ENCODE measurements at regions of chr16 and their contacts with region 1.

Region 1: DNA sequence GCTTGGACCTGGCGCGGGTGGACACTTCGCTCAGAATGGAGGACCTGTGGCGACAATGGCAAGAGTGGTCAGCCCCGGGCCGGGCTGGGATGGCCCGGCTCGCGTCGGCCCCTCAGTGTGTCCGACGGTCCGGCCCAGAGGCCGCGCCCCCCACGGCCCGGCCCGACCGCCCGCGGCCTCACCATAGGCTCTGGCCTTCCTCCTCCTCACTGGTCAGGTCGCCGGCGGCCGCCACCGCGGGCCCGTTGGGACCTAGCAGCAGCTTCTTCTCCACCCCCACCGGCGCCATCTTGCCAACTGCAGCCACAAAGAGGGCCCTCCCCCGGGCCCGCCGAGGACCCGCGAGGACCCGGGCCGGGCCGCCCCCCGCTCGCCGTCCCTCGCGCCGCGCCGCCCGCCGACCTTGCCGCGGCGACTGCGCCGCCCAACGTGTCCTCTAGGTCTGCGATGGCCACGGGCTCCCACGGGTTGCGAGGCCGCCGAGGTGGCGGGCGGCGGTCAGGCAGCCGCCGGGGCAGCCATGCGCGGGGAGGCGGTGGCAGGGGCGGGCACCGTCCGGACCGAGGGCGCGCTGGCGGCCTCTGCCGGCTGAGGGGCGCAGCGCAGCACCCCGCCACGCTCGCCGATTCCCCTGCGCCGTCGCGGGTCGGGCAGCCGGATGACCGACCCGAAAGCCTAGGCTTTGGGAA is at the start of gene DYNC1LI2:
- DNase-seq: peak; percentile 85
- H3K4me3 ChIP-seq: peak within 1 kb of the TSS; percentile 83
- H3K27ac ChIP-seq: peak within 1 kb of the TSS; percentile 9
- H3K4me1 ChIP-seq: peaks cover 15% of the 10 kb centered on the region
- CTCF ChIP-seq: peak; percentile 80; the same call in 1 of the 2 replicates
- total RNA-seq, gene DYNC1LI2: 48.4 and 48.9 TPM in 2 replicates

Region 2: DNA sequence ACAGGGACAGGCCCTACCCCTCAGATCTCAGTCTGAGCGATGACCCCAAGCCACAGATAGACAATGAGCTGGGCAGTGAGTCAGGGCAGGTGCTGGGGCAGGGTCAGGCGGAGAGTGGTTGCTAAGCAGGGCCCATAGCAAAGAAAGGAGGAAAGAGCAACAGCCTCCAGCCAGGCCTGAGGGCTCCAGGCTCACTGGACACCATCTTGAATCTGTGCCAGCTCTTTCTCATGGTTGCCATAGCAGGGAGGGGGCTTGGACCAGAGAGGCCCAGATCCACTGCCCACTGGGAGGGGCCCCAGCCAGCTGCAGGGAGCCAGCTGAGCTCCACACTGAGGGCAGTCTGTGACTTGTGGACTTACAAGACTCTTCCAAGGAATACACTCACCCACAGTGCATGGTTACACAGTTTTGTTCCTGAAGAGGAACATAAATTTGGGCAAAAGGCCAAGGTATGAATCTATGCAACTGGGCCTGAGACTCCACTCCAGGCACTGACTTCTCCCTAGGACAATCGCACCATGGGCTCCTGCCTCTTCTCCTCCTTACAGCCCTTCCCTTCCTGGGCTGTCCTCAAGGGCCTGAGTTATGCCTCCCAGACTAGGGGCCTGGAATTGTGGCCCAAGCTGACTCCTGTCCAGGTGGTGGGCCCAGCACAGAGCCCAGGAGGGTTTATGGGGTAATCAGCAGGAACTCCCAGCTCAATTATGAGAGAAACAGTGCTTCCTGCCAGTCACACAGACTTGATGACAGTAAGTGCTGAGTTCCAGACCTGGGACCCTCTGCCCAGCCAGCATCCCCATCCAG is 264.5 kb before region 1 on chr16:
- CTCF ChIA-PET with region 1: no interaction called
- POLR2A ChIA-PET with region 1: no interaction called
- intact Hi-C with region 1: no loop called
- DNase-seq: no peak
- H3K4me3 ChIP-seq: no peak overlapping the region
- H3K27ac ChIP-seq: no peak overlapping the region
- H3K4me1 ChIP-seq: no peaks in the 10 kb centered on the region
- CTCF ChIP-seq: no peak

Region 3: DNA sequence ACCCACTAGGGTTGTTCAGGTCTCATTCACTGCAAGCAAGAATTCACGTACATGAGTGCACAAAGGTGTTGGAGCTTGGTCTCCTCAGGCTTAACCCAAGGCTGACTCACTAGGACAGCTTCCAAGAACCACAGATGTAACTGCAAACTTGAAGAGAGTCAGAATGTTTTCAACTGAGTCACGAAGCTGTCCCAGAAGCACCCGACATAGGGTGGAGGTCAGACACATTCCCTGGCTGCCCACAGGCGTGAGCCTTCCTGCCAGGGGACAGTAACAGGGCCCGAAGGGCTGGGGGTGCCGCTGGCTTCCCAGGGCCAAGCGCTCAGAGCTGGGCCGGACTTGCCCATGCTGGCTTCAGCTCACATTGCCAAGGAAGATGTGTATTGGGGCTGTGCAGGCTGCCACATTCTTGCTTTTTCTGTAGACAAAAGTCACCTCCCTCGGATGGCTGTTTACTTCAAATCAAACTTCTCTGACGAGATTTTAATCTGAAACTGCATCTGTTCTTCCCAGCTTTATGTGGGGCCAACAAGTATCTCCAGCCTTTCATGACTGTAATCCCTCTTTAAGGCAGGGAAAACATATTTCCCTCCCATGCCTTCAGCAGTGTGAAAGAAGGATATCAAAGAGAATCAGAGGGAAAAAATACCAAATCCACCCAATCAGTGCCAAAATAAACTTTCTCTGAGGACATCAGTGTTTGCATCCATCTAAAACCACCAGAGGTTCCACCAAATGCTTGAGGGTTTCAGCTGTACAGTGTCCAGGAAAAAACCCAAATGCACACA is 132.7 kb before region 1 on chr16:
- CTCF ChIA-PET with region 1: no interaction called
- POLR2A ChIA-PET with region 1: no interaction called
- intact Hi-C with region 1: loop called (anchors 5 kb)
- DNase-seq: no peak
- H3K4me3 ChIP-seq: no peak overlapping the region
- H3K27ac ChIP-seq: no peak overlapping the region
- H3K4me1 ChIP-seq: peaks cover 27% of the 10 kb centered on the region
- CTCF ChIP-seq: no peak

Region 4: GRCh38 chr16:66844342-66845079 is 93.1 kb after region 1 on chr16 and contains the start of gene CA7:
- CTCF ChIA-PET with region 1: no interaction called
- POLR2A ChIA-PET with region 1: no interaction called
- intact Hi-C with region 1: no loop called
- DNase-seq: no peak
- H3K4me3 ChIP-seq: no peak within 1 kb of the TSS
- H3K27ac ChIP-seq: no peak within 1 kb of the TSS
- H3K4me1 ChIP-seq: peaks cover 8% of the 10 kb centered on the region
- CTCF ChIP-seq: no peak
- total RNA-seq, gene CA7: not detected in 2 replicates

Region 5: GRCh38 chr16:66858740-66859396 is 107.4 kb after region 1 on chr16:
- CTCF ChIA-PET with region 1: no interaction called
- POLR2A ChIA-PET with region 1: interaction called, 12 read pairs
- intact Hi-C with region 1: no loop called
- DNase-seq: no peak
- H3K4me3 ChIP-seq: no peak overlapping the region
- H3K27ac ChIP-seq: no peak overlapping the region
- H3K4me1 ChIP-seq: no peaks in the 10 kb centered on the region
- CTCF ChIP-seq: no peak